Sigmoid colon (tissue), 7 donors: ENCODE measurements at regions of chr1 and their contacts with region 1.

Region 1: GRCh38 chr1:17540255-17541001 is 930 bp downstream of the ARHGEF10L start:
- DNase-seq: peak; percentile 87
- H3K4me3 ChIP-seq: peak overlapping the region; percentile 78 to 96 (median 88)
- H3K27ac ChIP-seq: peak overlapping the region; percentile 96 to 98 (median 97)
- H3K4me1 ChIP-seq: peaks cover 0 to 58% (median 49%) of the 10 kb centered on the region in 4 donors
- H3K27me3 ChIP-seq: no peaks in the 10 kb centered on the region
- CTCF ChIP-seq: no peak
- EP300 ChIP-seq: no peak
- POLR2A ChIP-seq: no peak

Region 2: DNA sequence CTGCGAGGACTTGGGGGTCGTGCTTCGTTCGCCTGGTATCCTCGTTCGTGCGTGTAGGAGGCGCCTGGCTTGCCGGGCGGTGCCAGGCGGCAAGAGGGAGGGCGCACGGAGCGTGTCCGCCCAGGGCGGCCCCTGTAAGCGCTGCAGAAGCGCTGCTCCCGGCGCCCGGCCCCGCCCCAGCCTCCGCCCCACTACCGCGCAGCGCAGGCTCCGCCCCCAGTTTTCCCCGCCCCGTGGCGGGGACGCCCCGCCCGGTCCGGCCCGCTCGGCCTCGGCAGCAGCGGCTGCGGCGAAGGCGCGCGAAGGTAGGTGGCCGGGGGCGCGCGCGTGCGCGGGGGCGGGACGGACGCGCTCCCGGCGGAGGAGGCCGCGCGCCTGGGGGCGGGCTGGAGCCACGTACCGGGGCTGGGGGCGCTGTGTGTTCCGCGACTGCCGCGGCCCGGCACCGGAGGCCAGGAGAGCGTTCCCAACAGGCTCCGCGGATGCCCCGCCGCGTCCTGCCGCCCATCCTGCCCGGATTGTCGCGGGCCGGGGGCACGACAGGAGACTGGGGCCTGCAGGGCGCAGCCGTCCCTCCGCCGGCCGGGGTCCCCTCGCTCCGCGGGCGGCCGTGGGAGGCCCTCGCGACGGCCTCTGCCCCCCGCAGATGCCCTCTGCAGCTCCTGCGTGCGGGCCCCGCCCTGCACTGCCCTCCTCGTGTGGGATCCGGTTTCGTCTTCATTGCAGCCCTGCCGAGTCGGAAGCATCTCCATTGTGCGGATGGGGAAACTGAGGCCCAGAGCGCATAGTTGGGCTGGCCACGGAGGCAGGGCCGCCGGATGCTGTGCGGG is 626.4 kb before region 1 on chr1:
- intact Hi-C with region 1: loop called (anchors 5 kb)
- DNase-seq: peak; percentile 97
- H3K4me3 ChIP-seq: peak overlapping the region; percentile 52 to 96 (median 83)
- H3K27ac ChIP-seq: peak overlapping the region; percentile 83 to 91 (median 86)
- H3K4me1 ChIP-seq: peaks cover 0 to 33% (median 18%) of the 10 kb centered on the region in 4 donors
- H3K27me3 ChIP-seq: no peaks in the 10 kb centered on the region
- CTCF ChIP-seq: no peak
- EP300 ChIP-seq: no peak
- POLR2A ChIP-seq: peak; percentile 10 to 15

Region 3: GRCh38 chr1:17502326-17502778 is 38.1 kb before region 1 on chr1:
- intact Hi-C with region 1: loop called (anchors 5 kb)
- DNase-seq: peak; percentile 96
- H3K4me3 ChIP-seq: no peak overlapping the region
- H3K27ac ChIP-seq: peak overlapping the region; percentile 44 to 72 (median 64)
- H3K4me1 ChIP-seq: peaks cover 0 to 13% (median 11%) of the 10 kb centered on the region in 4 donors
- H3K27me3 ChIP-seq: no peaks in the 10 kb centered on the region
- CTCF ChIP-seq: peak; percentile 88 to 96 (median 91)
- EP300 ChIP-seq: peak in 1 of 4 donors; percentile 69
- POLR2A ChIP-seq: no peak

Region 4: GRCh38 chr1:17561561-17561985 is 21.1 kb after region 1 on chr1:
- intact Hi-C with region 1: loop called (anchors 2 kb)
- DNase-seq: no peak
- H3K4me3 ChIP-seq: peak overlapping the region in 1 of 4 donors; percentile 6
- H3K27ac ChIP-seq: peak overlapping the region; percentile 75 to 97 (median 92)
- H3K4me1 ChIP-seq: peaks cover 0 to 67% (median 65%) of the 10 kb centered on the region in 4 donors
- H3K27me3 ChIP-seq: no peaks in the 10 kb centered on the region
- CTCF ChIP-seq: no peak
- EP300 ChIP-seq: peak in 1 of 4 donors; percentile 3
- POLR2A ChIP-seq: no peak

Region 5: GRCh38 chr1:17587989-17588685 is 47.7 kb after region 1 on chr1:
- intact Hi-C with region 1: no loop called
- DNase-seq: no peak
- H3K4me3 ChIP-seq: no peak overlapping the region
- H3K27ac ChIP-seq: peak overlapping the region; percentile 69 to 90 (median 81)
- H3K4me1 ChIP-seq: peaks cover 0 to 58% (median 42%) of the 10 kb centered on the region in 4 donors
- H3K27me3 ChIP-seq: no peaks in the 10 kb centered on the region
- CTCF ChIP-seq: no peak
- EP300 ChIP-seq: no peak
- POLR2A ChIP-seq: peak in 1 of 2 donors; percentile 11